ENCODE measurements at regions of chr14 and their contacts with region 1.

Region 1: DNA sequence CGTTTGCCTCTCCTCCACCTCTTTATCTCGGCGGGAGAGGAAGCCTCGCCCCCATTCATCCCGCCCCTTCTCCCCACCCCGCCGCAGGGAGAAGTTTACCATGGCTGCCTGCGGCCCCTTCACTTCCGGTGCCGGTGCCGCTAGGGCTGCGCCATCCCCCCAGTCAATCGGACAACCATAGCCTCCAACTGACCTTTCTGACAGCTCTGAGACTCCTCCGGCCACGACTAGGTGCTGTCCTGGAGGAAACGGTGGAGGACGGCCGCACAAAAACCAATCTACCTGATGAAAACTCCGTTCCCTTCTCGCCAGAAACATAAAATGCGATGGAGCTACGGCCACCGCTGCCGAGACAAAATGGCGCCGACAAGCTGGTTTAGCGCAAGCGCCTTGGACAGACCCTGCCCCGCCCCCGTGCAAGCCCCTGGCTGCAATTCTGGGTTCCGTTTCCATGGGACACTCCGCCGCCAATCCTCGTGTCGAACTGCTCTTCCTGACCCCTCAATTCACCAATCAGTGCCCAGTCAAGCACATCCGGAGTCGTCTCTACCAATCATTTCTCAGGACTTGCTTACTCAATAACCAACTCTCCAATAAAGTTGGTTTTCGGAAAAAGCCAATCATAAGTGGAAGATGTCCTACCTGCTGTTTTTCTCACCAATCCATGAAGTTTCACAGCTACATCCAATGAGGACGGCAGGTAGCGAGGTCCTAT is 436 bp upstream of the ARID4A start:
- DNase-seq: peak; percentile 100
- H3K4me3 ChIP-seq: peak overlapping the region; percentile 77
- H3K27ac ChIP-seq: peak overlapping the region; percentile 96
- H3K4me1 ChIP-seq: peaks cover 7% of the 10 kb centered on the region
- H3K27me3 ChIP-seq: no peaks in the 10 kb centered on the region
- CTCF ChIP-seq: no peak

Region 2: DNA sequence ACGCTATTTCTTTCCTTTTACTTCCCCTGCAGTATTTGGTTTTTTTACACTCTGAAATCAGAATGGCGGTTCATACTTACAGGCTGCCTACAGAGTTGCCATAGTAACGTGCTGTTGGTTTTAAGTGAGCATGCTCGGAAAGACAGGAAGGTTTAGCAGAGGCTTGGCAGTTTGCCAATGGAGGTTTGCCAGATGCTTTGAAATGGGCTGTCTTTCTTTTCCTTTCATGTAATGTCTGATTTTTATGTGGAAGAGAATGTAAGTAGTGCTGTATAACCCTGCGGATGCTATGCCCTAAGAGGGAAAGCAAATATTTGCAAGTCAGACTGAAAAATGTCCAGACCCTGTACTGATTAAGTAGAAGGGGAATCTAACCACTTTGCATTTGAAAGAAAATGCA is 33.2 kb after region 1 on chr14:
- CTCF ChIA-PET with region 1: no interaction called
- POLR2A ChIA-PET with region 1: no interaction called
- intact Hi-C with region 1: loop called (anchors 2 kb)
- DNase-seq: peak; percentile 99
- H3K4me3 ChIP-seq: peak overlapping the region; percentile 43
- H3K27ac ChIP-seq: peak overlapping the region; percentile 58
- H3K4me1 ChIP-seq: peaks cover 24% of the 10 kb centered on the region
- H3K27me3 ChIP-seq: no peaks in the 10 kb centered on the region
- CTCF ChIP-seq: no peak

Region 3: DNA sequence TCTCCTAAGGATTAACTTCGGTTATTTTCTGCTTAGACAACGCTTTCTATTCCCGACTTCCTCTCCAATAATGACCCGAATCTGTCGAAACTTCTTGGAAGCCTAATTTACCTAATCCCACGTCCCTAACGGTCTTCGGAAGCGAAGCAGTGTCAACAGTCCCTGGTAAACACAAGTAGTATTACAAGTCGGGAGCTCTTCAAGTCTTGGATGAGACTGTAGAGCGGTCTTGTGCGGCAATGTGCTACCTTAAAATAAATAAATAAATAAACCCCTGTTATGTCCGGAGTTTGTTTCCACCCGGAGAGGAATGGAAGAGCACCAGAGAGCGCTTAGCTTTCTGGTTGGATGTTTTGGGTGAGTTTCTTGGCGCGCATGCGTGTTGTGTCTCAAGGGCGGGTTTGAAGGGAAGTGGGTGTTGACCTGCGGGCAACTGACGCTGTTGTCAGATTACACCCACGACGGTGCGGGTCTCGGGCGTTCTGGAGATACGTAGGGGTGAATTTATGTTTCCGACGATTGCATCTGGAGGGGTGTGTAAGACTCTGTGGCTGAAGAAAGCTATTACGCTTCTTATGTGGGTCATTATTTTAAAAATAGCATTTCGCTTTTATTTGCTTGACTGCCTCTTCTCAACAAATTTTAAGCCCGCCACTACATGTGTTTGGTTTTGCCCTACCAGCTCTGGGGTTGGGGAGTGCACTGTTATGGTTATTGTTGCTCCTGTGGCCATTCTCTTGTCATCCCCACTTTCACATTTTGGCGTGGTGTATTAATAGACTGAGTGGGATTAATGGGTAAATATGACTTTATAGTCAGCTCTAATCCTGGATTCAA is 129.6 kb after region 1 on chr14 and contains the starts of genes KIAA0586 and TIMM9:
- CTCF ChIA-PET with region 1: no interaction called
- POLR2A ChIA-PET with region 1: no interaction called
- intact Hi-C with region 1: loop called (anchors 1 kb)
- DNase-seq: peak; percentile 99
- H3K4me3 ChIP-seq: peak within 1 kb of the TSS; percentile 86
- H3K27ac ChIP-seq: peak within 1 kb of the TSS; percentile 98
- H3K4me1 ChIP-seq: peaks cover 12% of the 10 kb centered on the region
- H3K27me3 ChIP-seq: no peaks in the 10 kb centered on the region
- CTCF ChIP-seq: no peak
- total RNA-seq, gene KIAA0586: 42.1 and 45.3 TPM in 2 replicates
- total RNA-seq, gene TIMM9: 60.3 and 65.7 TPM in 2 replicates